Heart left ventricle (tissue), 16 donors: ENCODE measurements at regions of chr4 and their contacts with region 1.

Region 1: DNA sequence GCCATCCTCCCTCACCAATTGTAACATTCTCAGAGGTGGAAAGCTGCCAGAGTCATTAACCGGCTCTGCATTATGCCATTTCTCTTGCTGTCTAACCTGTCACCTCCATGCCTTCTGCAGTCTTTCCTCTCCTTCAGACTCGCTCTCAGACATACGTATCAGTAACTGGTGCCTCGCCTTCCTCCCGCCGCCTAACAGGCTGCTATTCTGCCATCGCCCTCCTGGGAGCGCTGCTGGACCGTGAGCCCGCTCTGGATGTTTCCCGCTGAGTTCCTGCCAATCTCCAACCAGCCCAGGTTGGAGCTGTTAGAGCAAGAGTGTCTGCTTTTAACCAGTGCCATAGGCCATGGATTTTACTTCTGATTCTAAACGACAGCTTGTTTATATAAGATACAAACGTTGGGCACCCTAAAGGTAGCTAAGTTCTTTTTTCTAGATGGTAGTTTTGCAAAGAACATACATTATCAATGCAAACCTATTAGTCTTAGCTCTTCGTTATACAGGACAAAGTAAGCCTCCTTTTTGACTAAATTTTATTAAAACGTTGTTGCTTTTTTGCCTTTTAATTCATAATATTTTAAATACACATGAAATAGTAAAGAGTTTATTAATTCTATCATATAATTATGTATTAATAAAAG is 59.5 kb upstream of the NEIL3 start:
- DNase-seq: peak; percentile 44 to 75 (median 47)
- ATAC-seq: peak; percentile 55 to 85 (median 78)
- H3K4me3 ChIP-seq: no peak overlapping the region
- H3K27ac ChIP-seq: no peak overlapping the region
- H3K4me1 ChIP-seq: peaks cover 0 to 2% (median 0%) of the 10 kb centered on the region in 12 donors
- H3K27me3 ChIP-seq: no peaks in the 10 kb centered on the region
- CTCF ChIP-seq: peak; percentile 64 to 89 (median 85)
- POLR2A ChIP-seq: no peak

Region 2: DNA sequence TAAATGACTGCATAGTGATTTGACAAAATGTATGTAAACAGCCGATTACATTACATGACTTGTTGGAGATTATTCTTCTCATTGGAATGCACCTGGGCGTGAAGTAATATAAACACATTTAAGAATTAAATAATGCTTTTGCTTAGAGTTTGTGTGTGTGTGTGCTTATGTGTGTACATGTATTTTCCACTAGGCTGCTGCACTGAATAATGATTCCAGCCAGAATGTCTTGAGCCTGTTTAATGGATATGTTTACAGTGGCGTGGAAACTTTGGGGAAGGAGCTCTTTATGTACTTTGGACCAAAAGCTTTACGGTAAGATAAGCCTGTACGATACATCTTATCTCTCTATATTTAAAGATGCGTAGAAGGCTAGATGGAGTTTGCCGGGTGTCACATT is 72.1 kb after region 1 on chr4:
- intact Hi-C with region 1: no loop called
- DNase-seq: no peak
- ATAC-seq: no peak
- H3K4me3 ChIP-seq: no peak overlapping the region
- H3K27ac ChIP-seq: no peak overlapping the region
- H3K4me1 ChIP-seq: no peaks in the 10 kb centered on the region
- H3K27me3 ChIP-seq: no peaks in the 10 kb centered on the region
- CTCF ChIP-seq: no peak
- POLR2A ChIP-seq: no peak

Region 3: DNA sequence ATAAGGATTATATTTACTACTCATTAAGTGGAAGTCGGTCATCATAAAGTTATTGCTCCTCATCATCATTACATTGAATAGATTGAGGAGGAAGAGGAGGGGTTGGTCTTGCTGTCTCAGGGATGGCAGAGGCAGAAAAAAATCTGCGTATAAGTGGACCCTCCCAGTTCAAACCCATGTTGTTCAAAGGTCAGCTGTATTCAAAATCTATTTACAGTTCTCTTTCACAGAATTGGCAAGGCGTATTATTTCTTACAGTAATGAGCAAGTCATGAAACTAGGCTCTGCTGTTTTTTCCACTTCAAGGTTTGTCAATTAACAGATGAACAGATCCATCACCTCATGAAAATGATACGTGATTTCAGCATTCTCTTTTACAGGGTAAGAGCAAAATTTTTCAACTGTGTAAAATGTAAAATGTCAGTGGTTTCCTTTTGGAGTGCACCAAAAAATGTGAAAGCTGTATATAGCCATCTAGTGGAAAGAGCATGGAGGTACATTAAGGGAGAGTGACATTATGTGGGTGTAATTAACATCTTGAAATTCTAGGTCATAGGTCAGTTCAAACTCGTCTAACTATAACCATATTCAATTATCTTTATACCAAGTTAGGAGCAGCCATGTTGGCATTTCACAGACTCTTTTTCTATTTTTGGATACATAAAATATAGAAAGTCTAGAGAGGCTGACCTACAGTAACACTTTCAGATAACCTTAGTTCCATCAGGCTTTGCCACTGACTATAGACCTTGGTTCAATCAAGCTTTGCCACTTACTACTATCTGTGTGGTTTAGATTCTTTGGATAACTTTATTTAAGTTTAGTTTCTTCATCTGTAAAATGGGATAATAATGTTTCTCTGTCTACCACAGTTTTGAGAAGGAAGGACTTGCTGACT is 89.5 kb after region 1 on chr4:
- intact Hi-C with region 1: loop called in 8 of 10 experiments (anchors 2 to 10 kb)
- DNase-seq: no peak
- ATAC-seq: peak in 3 of 4 donors; percentile 37 to 66 (median 56)
- H3K4me3 ChIP-seq: no peak overlapping the region
- H3K27ac ChIP-seq: no peak overlapping the region
- H3K4me1 ChIP-seq: peaks cover 0 to 5% (median 0%) of the 10 kb centered on the region in 12 donors
- H3K27me3 ChIP-seq: no peaks in the 10 kb centered on the region
- CTCF ChIP-seq: peak; percentile 42 to 68 (median 56)
- POLR2A ChIP-seq: no peak